ENCODE measurements at regions of chr12 and their contacts with region 1.

Region 1: GRCh38 chr12:22334410-22335290 is at the start of gene ST8SIA1:
- DNase-seq: peak; percentile 75
- H3K4me3 Mint-ChIP-seq: peak within 1 kb of the TSS; percentile 90
- H3K27ac Mint-ChIP-seq: peak within 1 kb of the TSS; percentile 49
- H3K4me1 Mint-ChIP-seq: peaks cover 22% of the 10 kb centered on the region
- H3K27me3 Mint-ChIP-seq: peaks cover 62% of the 10 kb centered on the region
- total RNA-seq, gene ST8SIA1: 0.21 and 0.28 TPM in 2 replicates

Region 2: DNA sequence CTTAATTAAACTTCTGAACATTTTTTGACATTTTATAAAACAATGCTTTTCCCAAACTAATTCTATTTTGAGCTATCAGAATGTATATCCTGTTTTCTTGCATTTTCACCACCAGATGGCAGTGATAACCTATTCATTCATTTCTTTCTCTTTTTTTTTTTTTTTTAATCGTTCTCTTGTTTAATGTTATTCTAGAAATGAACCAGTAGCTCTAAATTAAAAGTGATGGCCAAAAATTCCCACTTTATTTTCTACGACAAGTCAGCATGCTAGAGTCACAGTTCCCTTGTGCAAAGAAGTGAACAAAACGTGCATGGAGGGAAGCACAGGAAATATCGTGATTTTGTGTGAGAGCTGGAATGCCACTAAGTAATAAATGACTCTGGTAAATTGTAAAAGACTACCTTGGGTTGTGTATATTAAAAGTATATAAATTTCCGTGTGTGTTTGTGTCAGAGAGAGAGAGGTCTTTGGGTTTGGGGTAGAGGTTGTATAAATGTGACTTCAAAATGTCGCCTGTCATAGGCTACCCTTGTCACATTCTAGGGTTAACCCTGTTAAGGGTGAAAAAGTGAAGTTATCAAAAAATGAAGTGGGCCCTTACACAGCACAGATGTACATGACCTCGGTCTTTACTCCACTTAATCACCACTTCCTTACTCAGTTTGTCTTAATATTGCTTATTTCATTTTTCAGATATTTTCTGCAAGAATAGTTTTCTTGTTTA is 636.6 kb before region 1 on chr12:
- intact Hi-C with region 1: loop called (anchors 5 kb)
- DNase-seq: no peak
- H3K4me3 Mint-ChIP-seq: no peak overlapping the region
- H3K27ac Mint-ChIP-seq: no peak overlapping the region
- H3K4me1 Mint-ChIP-seq: no peaks in the 10 kb centered on the region
- H3K27me3 Mint-ChIP-seq: peaks cover 10% of the 10 kb centered on the region

Region 3: DNA sequence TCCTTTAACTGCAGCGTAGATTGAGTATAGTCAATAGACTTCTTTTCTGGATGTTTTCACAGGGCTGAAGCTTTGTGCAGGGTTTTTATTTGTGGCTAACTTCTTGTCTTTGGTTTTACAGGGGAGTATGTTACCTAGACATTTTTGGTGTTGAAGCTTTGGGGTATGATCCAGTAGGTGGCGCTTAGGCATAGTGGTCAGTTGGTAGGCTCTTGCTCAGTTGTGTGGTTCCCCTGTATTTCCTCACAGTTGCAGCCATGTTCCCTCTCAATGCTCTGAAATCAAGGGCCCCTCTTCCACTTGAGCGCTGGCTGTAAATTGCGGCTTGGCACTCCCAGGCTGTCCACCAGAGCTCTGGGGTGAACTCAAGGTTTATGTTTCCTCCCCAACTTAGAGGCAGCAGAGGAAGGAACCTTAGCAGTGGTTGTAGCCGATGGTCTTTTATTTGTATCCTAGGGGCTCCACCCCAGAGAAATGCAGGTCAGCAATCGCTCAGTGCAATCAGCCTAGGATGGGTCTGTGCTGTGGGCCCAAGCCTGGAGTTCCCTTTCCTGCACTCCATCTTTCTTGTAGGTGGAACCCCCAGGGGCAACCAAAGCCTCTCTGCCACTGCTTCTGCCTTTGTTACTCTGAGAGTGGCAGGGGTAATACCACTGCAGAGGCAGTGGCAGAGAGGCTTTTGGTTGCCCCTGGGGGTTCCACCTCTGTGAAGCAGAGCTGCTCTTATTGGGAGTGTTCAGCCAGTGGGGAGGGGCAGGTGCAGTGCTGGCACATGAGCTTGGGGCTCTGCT is 233.5 kb before region 1 on chr12:
- intact Hi-C with region 1: loop called (anchors 2 kb)
- DNase-seq: peak; percentile 80
- H3K4me3 Mint-ChIP-seq: no peak overlapping the region
- H3K27ac Mint-ChIP-seq: no peak overlapping the region
- H3K4me1 Mint-ChIP-seq: peaks cover 4% of the 10 kb centered on the region
- H3K27me3 Mint-ChIP-seq: peaks cover 20% of the 10 kb centered on the region

Region 4: GRCh38 chr12:22190969-22191368 is 143.7 kb before region 1 on chr12:
- intact Hi-C with region 1: no loop called
- DNase-seq: no peak
- H3K4me3 Mint-ChIP-seq: no peak overlapping the region
- H3K27ac Mint-ChIP-seq: no peak overlapping the region
- H3K4me1 Mint-ChIP-seq: no peaks in the 10 kb centered on the region
- H3K27me3 Mint-ChIP-seq: no peaks in the 10 kb centered on the region

Region 5: DNA sequence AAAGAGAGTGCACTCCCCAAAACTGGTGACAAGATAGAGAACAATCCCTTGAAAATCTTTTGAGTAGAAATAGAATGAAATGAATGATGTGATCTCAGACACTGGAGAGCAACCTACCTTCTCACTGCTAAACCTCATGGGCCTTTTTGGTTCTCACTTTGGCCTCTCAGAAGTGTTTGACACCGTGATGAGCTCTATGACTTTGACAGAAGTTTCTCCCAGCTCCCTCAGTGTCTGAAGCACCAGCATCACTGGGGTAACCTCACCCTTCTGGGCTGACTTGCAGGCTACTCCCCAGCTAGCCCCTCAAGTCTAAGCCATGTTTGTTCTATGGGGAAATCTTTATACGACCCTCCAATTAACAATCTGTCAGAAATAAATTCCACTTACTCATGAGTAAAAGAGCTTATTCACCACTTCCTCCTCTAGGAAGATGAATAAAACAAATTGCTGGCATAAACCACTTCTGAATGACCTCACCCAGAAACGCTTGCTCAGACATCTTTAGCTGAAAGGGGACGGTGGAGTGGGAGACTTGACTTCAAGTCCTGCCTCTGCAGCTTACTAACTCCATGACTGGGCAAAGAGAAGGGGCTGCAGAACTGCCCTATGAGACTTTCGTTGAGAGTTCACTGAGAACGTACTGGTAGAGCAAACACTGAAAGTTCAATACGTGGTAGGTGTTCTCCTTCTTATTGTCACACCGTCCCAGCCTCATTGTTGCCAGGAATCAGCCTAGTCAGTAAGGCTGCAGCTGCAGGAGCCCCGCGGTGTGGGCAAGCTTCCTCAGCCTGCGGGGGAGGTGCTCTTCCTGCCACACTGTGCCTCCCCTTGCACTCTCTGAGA is 46.7 kb before region 1 on chr12:
- intact Hi-C with region 1: no loop called
- DNase-seq: peak; percentile 58
- H3K4me3 Mint-ChIP-seq: peak overlapping the region; percentile 42
- H3K27ac Mint-ChIP-seq: peak overlapping the region; percentile 29
- H3K4me1 Mint-ChIP-seq: peaks cover 14% of the 10 kb centered on the region
- H3K27me3 Mint-ChIP-seq: peaks cover 4% of the 10 kb centered on the region

Region 6: DNA sequence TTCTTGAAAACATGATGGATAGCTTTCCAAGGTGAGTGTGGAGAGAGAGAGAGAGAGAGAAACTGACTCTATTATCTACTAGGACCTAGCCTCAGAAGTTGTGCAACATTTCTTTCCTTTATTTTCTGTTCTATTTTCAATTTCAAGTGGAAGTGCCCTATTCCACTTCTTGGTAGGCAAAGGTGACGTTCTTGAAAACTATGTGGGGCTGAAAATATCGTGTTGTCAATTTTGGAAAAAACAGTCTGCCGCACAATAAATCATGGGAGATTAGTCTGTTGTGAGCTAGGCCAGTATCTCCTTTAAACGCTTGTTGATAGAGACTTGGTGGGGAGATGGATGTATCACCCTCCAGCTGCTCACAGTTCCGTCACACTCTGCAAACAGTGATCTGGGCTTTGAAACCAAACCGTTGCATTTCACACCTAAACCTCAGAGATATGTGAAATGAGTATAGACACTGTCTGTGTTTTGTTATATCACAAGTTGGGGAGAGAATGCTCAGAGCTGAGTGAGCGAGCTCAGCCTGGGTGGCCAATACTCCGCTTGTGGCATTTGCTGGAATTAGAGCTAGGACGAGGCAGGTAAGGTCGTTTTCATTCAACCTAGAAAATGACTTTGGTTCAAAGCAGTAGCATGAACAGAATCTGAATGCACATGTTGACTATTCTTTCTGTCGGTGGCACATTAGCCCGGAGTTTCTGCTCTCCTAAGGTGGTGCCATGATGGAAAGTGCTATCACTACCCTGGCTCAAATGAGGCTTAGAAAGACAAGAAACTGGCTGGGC is 74.9 kb after region 1 on chr12:
- intact Hi-C with region 1: loop called (anchors 5 kb)
- DNase-seq: peak; percentile 75
- H3K4me3 Mint-ChIP-seq: peak overlapping the region; percentile 45
- H3K27ac Mint-ChIP-seq: peak overlapping the region; percentile 54
- H3K4me1 Mint-ChIP-seq: peaks cover 15% of the 10 kb centered on the region
- H3K27me3 Mint-ChIP-seq: no peaks in the 10 kb centered on the region

Measured in activated CD4-positive, alpha-beta T cell treated with anti-CD3 and anti-CD28 coated beads, Interleukin-2, amount 10 ng/mL, durations not matched to agents 24 days and 14 days (primary cell).